GM10248 (cell line): ENCODE measurements at regions of chr11 and their contacts with region 1.

Region 1: DNA sequence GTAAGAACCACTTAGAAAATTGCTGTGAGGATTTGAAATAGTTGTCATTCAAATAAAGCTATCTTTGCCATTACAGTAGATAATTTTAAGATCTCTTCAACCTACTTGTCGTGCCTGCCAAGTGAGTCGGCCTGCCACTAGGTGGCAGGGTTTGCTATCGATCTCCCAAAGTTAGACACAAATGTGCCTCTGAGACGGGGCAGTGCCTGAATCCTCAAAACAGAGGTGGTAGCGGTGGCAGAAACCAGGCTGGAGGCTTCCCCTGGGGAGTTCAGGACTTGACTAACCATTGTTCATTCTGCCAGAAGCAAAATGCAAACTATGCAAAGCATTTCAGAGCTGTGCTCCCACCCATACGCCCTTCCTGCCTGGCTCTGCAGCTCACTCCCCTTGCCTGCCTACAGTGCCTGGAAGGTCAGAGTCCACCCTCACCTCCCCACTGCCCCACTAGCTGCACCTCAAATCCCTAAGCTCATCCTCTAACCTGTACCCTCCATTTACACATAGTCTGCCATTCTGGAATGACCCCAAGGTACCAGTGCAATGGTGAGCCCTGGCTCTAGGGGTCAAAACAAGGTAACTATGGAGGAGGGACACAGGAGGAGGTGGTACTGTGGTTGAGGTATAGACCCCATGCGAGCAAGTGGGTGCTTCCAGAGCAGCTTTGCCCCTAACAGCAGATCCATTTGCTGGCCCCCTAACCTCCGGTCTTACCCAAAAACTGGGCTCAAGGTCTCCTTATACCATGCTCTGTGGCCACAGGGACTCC is 82.1 kb downstream of the C11orf58 start:
- DNase-seq: peak; percentile 78
- CTCF ChIP-seq: peak; percentile 87

Region 2: DNA sequence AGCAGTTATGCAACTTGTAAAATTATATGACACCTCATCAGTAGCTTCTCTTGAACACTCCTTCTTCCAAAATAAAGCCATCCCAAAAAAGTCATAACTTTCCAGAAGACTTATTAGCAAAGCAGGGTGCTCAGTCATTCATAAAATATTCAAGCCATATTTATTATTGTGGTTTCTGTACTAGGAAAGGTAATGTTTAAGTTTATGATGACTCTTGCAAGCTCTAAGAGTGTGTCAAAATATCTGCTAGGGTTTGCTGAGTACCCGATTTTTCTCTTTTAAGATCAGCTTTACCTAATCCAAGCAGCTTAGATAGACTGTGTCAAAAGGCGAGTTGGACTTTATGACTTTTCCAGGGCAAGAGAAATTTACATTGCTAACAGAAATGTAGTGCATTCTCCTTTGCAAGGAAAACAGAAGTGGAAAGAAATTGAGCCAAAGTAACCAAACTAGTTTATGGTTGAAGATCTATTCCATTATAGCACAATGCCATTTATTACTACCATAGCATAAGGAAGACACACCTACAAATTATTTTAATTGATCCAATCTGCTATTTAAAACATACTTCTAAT is 366.1 kb before region 1 on chr11:
- CTCF ChIA-PET with region 1: no interaction called
- POLR2A ChIA-PET with region 1: no interaction called
- DNase-seq: no peak
- CTCF ChIP-seq: no peak

Region 3: DNA sequence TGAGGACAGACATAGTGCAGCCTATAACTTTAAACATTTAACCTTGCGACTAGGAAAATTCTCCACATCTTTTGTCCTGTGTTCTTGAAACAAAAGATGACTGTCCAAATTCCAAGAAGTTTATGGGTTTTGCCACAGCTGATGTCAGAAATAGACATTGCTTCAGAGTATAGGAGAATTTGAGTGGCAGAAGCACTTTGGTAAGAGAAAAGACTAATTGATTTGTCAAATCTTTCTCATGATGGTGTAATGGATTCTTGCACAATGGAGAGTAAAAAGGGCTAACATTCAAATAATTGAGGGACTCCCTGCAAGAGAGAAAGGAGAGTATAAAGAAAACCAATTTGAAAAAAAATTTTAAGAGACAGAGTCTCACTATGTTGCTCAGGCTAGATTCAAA is 56.8 kb before region 1 on chr11:
- CTCF ChIA-PET with region 1: no interaction called
- POLR2A ChIA-PET with region 1: no interaction called
- DNase-seq: no peak
- CTCF ChIP-seq: no peak

Region 4: DNA sequence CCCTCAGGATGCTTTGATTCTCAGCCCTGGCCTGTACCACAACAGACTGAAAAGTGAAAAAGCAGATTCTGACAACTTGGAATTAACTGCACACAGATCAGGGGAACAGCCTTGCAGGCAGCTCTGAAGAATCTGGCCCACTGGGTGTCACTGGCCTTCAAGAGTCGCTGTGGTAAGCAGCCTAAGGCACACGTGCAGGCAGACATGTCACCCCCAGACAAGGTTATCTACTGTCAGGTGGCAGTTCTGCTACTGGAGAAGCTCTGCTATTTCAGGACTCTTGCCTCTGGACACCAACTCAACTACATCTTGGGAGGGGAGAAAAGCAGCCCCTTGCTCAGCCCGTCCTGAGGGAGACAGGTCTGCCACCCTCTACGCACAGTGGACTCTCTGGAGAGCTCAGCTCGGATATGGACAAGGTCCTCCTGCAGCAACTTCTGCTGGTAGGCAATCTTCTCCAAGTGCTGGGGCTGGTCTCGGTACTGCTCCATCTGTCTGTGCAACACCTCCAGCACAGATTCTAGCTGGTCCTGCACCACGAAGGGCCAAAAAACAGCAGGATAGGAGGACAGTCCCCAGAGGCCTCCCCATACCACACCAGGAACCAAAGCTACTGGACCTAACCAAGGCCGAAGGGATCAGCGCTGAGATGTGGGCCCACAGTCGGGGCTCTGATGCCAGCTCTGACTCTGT is 19.1 kb before region 1 on chr11:
- CTCF ChIA-PET with region 1: interaction called, 30 read pairs
- POLR2A ChIA-PET with region 1: no interaction called
- DNase-seq: no peak
- CTCF ChIP-seq: no peak

Region 5: GRCh38 chr11:16831316-16832192 is 11.0 kb after region 1 on chr11:
- CTCF ChIA-PET with region 1: interaction called, 69 read pairs
- POLR2A ChIA-PET with region 1: no interaction called
- DNase-seq: no peak
- CTCF ChIP-seq: no peak

Region 6: DNA sequence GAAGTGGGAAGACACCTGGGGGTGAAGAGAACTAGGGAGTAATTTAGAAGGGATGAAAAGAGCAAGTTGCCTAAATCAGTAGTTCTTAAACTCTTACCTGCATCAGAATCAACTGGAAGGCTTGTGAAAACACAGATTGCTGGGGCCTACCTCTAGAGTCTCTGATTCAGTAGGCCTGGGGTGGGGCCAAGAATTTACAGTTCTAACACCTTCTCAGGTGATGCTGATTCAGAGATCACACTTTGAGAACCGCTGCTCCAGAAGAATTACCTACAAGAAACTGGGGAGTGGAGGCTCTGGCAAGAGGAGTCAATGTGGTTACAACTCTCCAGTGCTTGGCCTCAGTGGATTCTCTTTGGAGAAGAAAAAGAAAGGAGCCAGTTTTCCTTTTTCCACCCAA is 46.6 kb after region 1 on chr11:
- CTCF ChIA-PET with region 1: interaction called, 11 read pairs
- POLR2A ChIA-PET with region 1: no interaction called
- DNase-seq: no peak
- CTCF ChIP-seq: no peak

Region 7: GRCh38 chr11:16923987-16924386 is 103.5 kb after region 1 on chr11:
- CTCF ChIA-PET with region 1: interaction called, 12 read pairs
- POLR2A ChIA-PET with region 1: no interaction called
- DNase-seq: peak; percentile 45
- CTCF ChIP-seq: no peak

Region 8: DNA sequence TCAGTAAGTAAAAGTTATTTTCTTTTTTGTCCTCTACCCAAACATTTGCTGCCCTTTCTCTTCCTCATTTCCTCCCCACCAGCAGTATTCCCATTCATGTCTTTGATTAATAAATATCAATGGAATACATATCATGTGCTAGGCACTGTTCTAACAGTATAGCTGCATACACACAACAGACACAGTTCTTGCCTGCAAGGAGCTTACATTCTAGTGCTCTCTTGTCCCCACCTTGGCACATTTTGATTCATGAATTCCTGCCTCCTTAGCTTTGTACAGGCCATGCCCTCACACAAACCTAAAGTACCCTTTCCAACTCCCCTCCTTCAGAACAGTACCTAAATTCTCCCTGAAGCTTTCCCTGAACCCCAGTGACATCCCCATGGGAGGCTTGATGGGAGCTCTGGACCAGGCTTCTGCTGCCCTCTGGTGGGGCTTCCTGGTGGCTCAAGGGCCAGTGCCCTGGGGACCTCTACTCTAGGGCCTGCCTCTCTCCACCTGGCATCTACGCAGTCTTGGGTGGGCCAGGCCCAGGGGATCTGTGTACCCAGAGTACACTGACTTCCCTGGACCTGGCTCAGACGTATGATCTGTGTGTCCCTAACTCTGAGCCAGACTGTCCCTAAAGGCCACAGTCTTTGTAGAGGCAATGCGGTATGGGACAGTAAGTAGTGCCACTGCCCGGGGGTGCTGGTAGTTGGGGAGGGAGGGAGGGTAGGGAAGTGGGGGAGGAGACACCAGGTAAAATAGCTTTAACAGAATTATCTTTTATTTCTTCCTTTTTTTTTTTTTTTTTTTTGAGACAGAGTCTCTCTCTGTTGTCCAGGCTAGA is 242.9 kb after region 1 on chr11:
- CTCF ChIA-PET with region 1: interaction called, 66 read pairs
- POLR2A ChIA-PET with region 1: no interaction called
- DNase-seq: peak; percentile 68
- CTCF ChIP-seq: peak; percentile 73